Testis (tissue), 5 donors: ENCODE measurements at regions of chr6 and their contacts with region 1.

Region 1: DNA sequence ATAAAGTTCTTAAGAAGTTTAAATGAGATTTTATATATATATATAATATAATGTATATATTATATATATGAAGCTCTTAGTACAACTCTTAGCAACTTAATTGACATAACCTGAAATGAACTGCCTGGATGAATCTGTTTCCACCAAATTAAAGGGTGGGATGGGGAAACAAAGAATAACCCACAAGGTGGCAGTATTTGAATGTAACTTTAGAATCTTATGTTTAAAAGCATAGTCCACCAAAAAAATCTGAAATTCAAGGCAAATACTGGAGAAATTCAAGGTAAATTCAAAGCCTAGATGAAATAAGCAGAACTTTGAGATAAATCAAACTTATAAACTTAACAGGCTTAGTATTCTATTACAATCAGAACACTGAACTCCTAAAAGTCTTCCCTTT is 4.4 kb upstream of the IBTK start:
- DNase-seq: no peak
- H3K4me3 ChIP-seq: no peak overlapping the region
- H3K27ac ChIP-seq: no peak overlapping the region
- H3K4me1 ChIP-seq: peaks cover 4% of the 10 kb centered on the region
- H3K27me3 ChIP-seq: no peaks in the 10 kb centered on the region
- CTCF ChIP-seq: peak in 2 of 3 experiments; percentile 18 to 49
- POLR2A ChIP-seq: no peak

Region 2: GRCh38 chr6:83057705-83058321 is 805.9 kb after region 1 on chr6:
- intact Hi-C with region 1: loop called (anchors 10 kb)
- DNase-seq: peak; percentile 63
- H3K4me3 ChIP-seq: no peak overlapping the region
- H3K27ac ChIP-seq: no peak overlapping the region
- H3K4me1 ChIP-seq: no peaks in the 10 kb centered on the region
- H3K27me3 ChIP-seq: no peaks in the 10 kb centered on the region
- CTCF ChIP-seq: peak; percentile 41 to 55 (median 44)
- POLR2A ChIP-seq: no peak